Cardiac septum (tissue), 1 donor: ENCODE measurements at regions of chr5 and their contacts with region 1.

Region 1: GRCh38 chr5:5141625-5142532 is 1.7 kb downstream of the ADAMTS16 start:
- DNase-seq: no peak

Region 2: DNA sequence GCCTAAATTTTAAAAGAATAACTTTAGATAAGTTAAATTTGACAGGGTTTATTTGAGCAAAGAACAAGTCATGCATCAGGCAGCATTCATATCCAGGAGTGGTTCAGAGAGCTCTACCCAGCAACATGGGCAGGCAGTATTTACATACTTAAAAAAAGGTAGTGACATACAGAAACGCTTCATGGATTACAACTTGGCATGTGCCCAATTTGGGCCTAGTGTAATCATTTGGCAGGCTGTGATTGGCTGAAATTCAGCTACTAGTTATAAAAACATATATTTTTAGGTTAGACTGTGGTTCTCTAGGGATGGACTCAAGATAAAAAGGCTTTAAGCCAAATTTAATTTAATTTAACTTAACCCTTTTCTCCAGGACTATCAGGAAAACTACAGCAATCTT is 375.8 kb before region 1 on chr5:
- intact Hi-C with region 1: no loop called
- DNase-seq: no peak

Region 3: DNA sequence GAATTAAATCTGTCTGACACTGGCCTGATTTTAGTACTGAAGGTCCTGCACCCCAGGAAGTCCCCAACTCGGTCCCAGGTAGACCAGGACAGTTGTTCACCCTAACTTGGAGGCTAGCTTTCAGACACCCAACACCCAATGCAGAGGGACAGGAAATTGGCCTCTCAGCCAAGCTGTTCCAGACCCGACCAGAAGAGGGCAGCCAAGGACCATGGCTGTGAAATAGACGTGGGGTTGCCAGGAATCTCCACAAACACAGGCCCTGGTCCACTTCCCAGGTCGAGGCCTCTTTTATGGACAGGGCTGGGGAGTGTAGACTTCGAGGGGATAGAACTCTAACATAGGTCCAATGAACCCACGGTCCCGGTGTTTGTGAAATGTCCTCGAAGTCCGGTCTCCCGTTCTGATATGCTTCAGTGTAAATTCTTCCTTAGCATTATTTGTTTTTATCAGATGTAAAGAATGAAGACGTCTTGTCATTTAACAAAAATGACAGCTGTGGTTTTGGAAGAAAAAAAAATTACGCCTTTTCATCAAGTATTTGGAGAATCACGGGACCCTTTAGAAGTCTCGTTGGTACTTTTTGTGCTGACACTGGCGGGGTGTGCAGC is 262.1 kb before region 1 on chr5:
- intact Hi-C with region 1: loop called (anchors 5 kb)
- DNase-seq: no peak

Region 4: GRCh38 chr5:5398046-5398445 is 256.2 kb after region 1 on chr5:
- intact Hi-C with region 1: loop called (anchors 1 kb)
- DNase-seq: no peak

Region 5: GRCh38 chr5:5421961-5422818 is 280.3 kb after region 1 on chr5 and contains the start of gene ICE1:
- intact Hi-C with region 1: loop called (anchors 1 kb)
- DNase-seq: peak; percentile 98
- total RNA-seq, gene ICE1: 19.8 TPM